Activated B cell treated with CpG ODN at 0.5 μM for 24 hours (primary cell): ENCODE measurements at regions of chrX and their contacts with region 1.

Region 1: DNA sequence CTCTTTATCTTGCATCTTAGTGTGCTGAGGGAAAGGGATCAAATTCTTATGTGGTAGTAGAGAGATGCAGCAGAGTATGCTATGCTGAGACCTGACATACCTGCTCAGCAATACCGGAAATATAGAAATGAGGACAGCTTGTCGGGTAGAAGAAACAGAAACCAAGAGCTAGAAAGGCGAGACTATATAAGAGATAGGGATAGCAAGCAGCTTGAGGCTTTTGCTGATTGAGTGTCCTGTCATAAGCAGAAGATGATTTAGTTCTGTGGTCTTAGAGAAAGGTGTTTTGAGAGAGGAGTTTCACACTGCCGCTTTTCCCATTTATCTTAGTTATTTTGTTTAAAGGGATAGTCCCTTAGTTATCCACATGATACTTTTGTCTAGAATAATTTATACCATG is 31.7 kb downstream of the USP9X start:
- DNase-seq: no peak
- ATAC-seq: peak; percentile 58
- H3K4me3 Mint-ChIP-seq: peak overlapping the region; percentile 40
- H3K27ac Mint-ChIP-seq: peak overlapping the region; percentile 79
- H3K4me1 Mint-ChIP-seq: peaks cover 71% of the 10 kb centered on the region
- H3K27me3 Mint-ChIP-seq: no peaks in the 10 kb centered on the region
- CTCF ChIP-seq: no peak

Region 2: GRCh38 chrX:40647307-40648197 is 469.4 kb before region 1 on chrX and contains the start of gene CXorf38:
- CTCF ChIA-PET with region 1: interaction called, 8 read pairs
- POLR2A ChIA-PET with region 1: no interaction called
- intact Hi-C with region 1: loop called (anchors 1 kb)
- DNase-seq: peak; percentile 83
- ATAC-seq: peak; percentile 67
- H3K4me3 Mint-ChIP-seq: peak within 1 kb of the TSS; percentile 94
- H3K27ac Mint-ChIP-seq: peak within 1 kb of the TSS; percentile 93
- H3K4me1 Mint-ChIP-seq: peaks cover 39% of the 10 kb centered on the region
- H3K27me3 Mint-ChIP-seq: no peaks in the 10 kb centered on the region
- CTCF ChIP-seq: no peak
- total RNA-seq, gene CXorf38: 20.9 and 21.9 TPM in 2 replicates

Region 3: DNA sequence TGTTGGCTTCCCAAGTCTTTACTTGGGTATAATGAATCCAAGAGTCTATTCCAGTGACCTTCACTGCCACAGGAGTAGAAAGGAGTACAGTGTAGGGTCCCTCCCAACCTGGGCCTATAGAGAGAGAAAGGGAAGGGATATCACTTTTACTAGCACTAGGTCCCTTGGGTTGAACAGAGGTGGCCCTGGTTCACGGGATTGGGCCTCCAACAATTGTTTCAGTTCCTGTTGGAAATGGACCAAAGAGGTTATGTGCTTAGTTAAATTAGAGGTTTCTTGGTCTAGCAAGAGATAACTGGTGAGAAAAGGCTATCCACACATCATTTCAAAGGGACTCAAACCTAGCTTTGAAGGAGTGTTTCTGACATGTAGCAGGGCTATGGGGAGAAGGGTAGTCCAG is 324.5 kb before region 1 on chrX:
- CTCF ChIA-PET with region 1: interaction called, 16 read pairs
- POLR2A ChIA-PET with region 1: no interaction called
- intact Hi-C with region 1: loop called (anchors 2 kb)
- DNase-seq: no peak
- ATAC-seq: no peak
- H3K4me3 Mint-ChIP-seq: no peak overlapping the region
- H3K27ac Mint-ChIP-seq: no peak overlapping the region
- H3K4me1 Mint-ChIP-seq: peaks cover 1% of the 10 kb centered on the region
- H3K27me3 Mint-ChIP-seq: peaks cover 3% of the 10 kb centered on the region
- CTCF ChIP-seq: no peak

Region 4: GRCh38 chrX:40877887-40878286 is 239.1 kb before region 1 on chrX:
- CTCF ChIA-PET with region 1: interaction called, 64 read pairs
- POLR2A ChIA-PET with region 1: interaction called, 7 read pairs
- intact Hi-C with region 1: loop called (anchors 1 kb)
- DNase-seq: no peak
- ATAC-seq: peak; percentile 40
- H3K4me3 Mint-ChIP-seq: no peak overlapping the region
- H3K27ac Mint-ChIP-seq: no peak overlapping the region
- H3K4me1 Mint-ChIP-seq: no peaks in the 10 kb centered on the region
- H3K27me3 Mint-ChIP-seq: peaks cover 6% of the 10 kb centered on the region
- CTCF ChIP-seq: no peak

Region 5: GRCh38 chrX:41010188-41010846 is 106.6 kb before region 1 on chrX:
- CTCF ChIA-PET with region 1: interaction called, 4 read pairs
- POLR2A ChIA-PET with region 1: no interaction called
- intact Hi-C with region 1: loop called (anchors 2 kb)
- DNase-seq: peak; percentile 16
- ATAC-seq: peak; percentile 84
- H3K4me3 Mint-ChIP-seq: peak overlapping the region; percentile 78
- H3K27ac Mint-ChIP-seq: peak overlapping the region; percentile 73
- H3K4me1 Mint-ChIP-seq: peaks cover 14% of the 10 kb centered on the region
- H3K27me3 Mint-ChIP-seq: peaks cover 5% of the 10 kb centered on the region
- CTCF ChIP-seq: no peak

Region 6: DNA sequence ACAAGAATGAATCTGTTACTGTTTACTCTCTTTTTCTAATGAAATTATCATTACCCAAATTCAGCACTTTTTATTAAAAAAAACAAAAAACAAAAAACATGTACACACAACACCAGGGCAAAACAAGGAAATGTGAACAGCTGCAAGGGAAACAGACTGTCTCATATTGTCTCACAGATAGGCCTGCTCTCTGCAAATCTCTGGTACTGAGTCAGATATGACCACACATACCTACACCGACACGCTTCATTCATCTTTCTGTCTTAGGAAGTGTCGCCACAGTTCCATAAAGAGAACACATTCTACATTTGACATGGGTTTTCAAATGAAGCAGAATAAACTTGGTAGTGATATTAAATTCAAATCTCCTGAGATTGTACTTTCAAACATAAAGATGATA is 479.6 kb after region 1 on chrX:
- CTCF ChIA-PET with region 1: no interaction called
- POLR2A ChIA-PET with region 1: no interaction called
- intact Hi-C with region 1: no loop called
- DNase-seq: no peak
- ATAC-seq: peak; percentile 95
- H3K4me3 Mint-ChIP-seq: peak overlapping the region; percentile 11
- H3K27ac Mint-ChIP-seq: peak overlapping the region; percentile 68
- H3K4me1 Mint-ChIP-seq: peaks cover 29% of the 10 kb centered on the region
- H3K27me3 Mint-ChIP-seq: no peaks in the 10 kb centered on the region
- CTCF ChIP-seq: no peak